ENCODE measurements at regions of chr1 and their contacts with region 1.

Region 1: DNA sequence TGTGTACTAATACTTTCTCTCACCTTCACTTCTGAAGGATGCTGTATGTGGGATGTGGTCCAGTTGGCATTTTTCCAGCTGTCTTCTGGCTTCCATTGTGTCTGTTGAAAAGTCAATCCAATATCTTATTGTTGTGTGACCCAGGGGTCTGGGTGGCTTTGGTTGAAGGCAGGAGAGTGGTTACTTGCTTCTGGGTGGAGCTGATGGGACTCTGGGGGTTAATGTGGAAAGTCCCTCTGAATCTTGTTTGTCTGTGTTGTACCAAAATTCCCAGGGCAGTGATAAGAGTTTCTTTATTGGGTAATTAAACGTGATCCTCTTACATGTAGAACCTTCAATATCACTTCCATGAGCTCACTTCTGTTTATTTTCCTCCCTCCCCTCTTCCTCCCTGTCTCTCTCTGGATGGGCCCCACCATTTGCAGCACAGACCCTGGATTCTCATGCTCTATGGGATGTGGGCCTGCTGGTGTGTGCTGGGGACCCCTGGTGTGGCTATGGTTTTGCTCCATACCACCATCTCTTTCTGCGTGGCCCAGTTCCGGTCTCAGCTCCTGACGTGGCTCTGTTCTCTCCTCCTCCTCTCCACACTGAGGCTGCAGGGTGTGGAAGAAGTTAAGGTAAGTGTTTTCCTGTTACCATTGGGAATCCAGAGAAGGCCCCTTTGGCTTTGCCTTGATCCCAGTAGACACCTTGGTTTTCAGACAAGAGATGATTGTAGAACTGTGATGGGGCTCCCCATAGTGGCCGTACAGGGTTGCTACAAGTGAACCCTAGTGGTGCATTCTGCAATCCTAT is 71.5 kb downstream of the HHAT start:
- DNase-seq: peak; percentile 7 to 78
- H3K4me3 ChIP-seq: no peak overlapping the region
- H3K27ac ChIP-seq: peak overlapping the region; percentile 34; the same call in 1 of the 2 replicates
- H3K4me1 ChIP-seq: no peaks in the 10 kb centered on the region
- H3K27me3 ChIP-seq: no peaks in the 10 kb centered on the region
- CTCF ChIP-seq: peak; percentile 48 to 98 (median 95)
- EP300 ChIP-seq: no peak
- POLR2A ChIP-seq: no peak
- RAD21 ChIP-seq: peak; percentile 88 to 94

Region 2: GRCh38 chr1:210360852-210361477 is 39.3 kb before region 1 on chr1:
- CTCF ChIA-PET with region 1: interaction called, 19 read pairs
- POLR2A ChIA-PET with region 1: no interaction called
- DNase-seq: no peak
- H3K4me3 ChIP-seq: no peak overlapping the region
- H3K27ac ChIP-seq: no peak overlapping the region
- H3K4me1 ChIP-seq: peaks cover 6 to 14% (median 12%) of the 10 kb centered on the region in 4 experiments; a peak in 5 of 7 replicates
- H3K27me3 ChIP-seq: no peaks in the 10 kb centered on the region
- CTCF ChIP-seq: peak in 2 of 3 experiments; percentile 31 to 50; a peak in 2 of 4 replicates
- EP300 ChIP-seq: no peak
- POLR2A ChIP-seq: no peak
- RAD21 ChIP-seq: peak; percentile 64 to 66

Region 3: DNA sequence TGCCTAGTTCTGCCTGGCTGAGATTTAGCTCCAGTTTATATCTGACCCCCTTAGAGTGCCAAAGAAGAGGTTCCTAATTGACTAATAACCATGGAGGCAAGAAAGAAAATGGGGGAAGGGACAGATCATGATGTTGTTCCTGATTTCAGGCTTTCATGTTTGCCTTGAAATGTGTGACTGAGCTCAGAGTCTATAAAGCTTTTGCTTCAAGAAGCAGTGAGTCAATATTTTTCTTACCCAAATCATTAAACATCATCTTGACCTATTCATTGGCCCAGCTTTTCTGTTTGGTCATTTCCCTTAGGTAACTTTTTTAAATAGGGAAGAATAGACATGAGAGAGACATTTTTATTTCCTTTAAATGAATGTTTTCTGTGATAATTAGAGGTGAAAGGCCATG is 15.6 kb before region 1 on chr1:
- CTCF ChIA-PET with region 1: interaction called, 179 read pairs
- POLR2A ChIA-PET with region 1: no interaction called
- DNase-seq: no peak
- H3K4me3 ChIP-seq: no peak overlapping the region
- H3K27ac ChIP-seq: no peak overlapping the region
- H3K4me1 ChIP-seq: no peaks in the 10 kb centered on the region; a peak in 1 of 7 replicates
- H3K27me3 ChIP-seq: no peaks in the 10 kb centered on the region
- CTCF ChIP-seq: no peak
- EP300 ChIP-seq: no peak
- POLR2A ChIP-seq: no peak
- RAD21 ChIP-seq: no peak